Activated naive CD4-positive, alpha-beta T cell treated with anti-CD3 and anti-CD28 coated beads for 36 hours (primary cell): ENCODE measurements at regions of chr4 and their contacts with region 1.

Region 1: GRCh38 chr4:153127760-153128494 is 76.3 kb upstream of the TRIM2 start:
- DNase-seq: peak; percentile 95
- H3K4me3 Mint-ChIP-seq: no peak overlapping the region
- H3K27ac Mint-ChIP-seq: no peak overlapping the region
- H3K4me1 Mint-ChIP-seq: peaks cover 9% of the 10 kb centered on the region
- H3K27me3 Mint-ChIP-seq: no peaks in the 10 kb centered on the region

Region 2: GRCh38 chr4:152817331-152817730 is 310.6 kb before region 1 on chr4:
- CTCF ChIA-PET with region 1: no interaction called
- intact Hi-C with region 1: no loop called
- DNase-seq: no peak
- H3K4me3 Mint-ChIP-seq: no peak overlapping the region
- H3K27ac Mint-ChIP-seq: peak overlapping the region; percentile 28
- H3K4me1 Mint-ChIP-seq: peaks cover 12% of the 10 kb centered on the region
- H3K27me3 Mint-ChIP-seq: no peaks in the 10 kb centered on the region

Region 3: DNA sequence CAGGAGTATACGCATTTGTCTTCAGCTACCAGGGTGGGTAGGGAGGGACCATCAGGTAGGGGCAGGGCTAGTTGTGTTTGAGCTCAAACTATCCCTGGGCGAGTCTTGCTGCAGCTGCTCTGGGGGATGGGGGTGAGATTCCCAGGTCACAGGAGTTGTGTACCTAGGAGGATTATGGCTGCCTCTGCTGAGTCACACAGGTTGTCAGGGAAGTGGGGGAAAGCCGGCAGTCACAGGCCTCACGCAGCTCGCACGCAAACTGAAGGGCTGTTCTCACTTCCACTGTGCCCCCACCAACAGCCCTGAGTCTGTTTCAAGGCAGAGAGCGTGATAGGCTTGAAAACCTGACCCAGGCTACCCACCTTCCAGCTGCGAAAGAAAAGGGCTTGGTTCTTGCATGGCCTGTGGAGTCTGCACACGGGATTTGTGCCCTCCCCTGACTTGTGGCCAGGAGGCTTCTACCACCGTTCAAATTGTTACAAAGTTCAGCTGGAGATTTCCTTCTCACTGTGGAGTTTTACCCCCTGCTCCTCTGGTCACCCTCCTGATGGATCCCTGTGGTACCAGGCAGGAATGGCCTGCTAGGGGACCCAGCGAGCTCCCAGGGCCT is 284.3 kb before region 1 on chr4:
- CTCF ChIA-PET with region 1: interaction called, 46 read pairs
- intact Hi-C with region 1: loop called (anchors 1 kb)
- DNase-seq: no peak
- H3K4me3 Mint-ChIP-seq: no peak overlapping the region
- H3K27ac Mint-ChIP-seq: no peak overlapping the region
- H3K4me1 Mint-ChIP-seq: peaks cover 17% of the 10 kb centered on the region
- H3K27me3 Mint-ChIP-seq: no peaks in the 10 kb centered on the region

Region 4: GRCh38 chr4:152937336-152938236 is 190.3 kb before region 1 on chr4:
- CTCF ChIA-PET with region 1: interaction called, 9 read pairs
- intact Hi-C with region 1: loop called (anchors 1 kb)
- DNase-seq: no peak
- H3K4me3 Mint-ChIP-seq: peak overlapping the region; percentile 67
- H3K27ac Mint-ChIP-seq: no peak overlapping the region
- H3K4me1 Mint-ChIP-seq: peaks cover 16% of the 10 kb centered on the region
- H3K27me3 Mint-ChIP-seq: peaks cover 44% of the 10 kb centered on the region

Region 5: GRCh38 chr4:153095448-153096204 is 32.3 kb before region 1 on chr4:
- CTCF ChIA-PET with region 1: interaction called, 45 read pairs
- intact Hi-C with region 1: no loop called
- DNase-seq: no peak
- H3K4me3 Mint-ChIP-seq: no peak overlapping the region
- H3K27ac Mint-ChIP-seq: no peak overlapping the region
- H3K4me1 Mint-ChIP-seq: peaks cover 4% of the 10 kb centered on the region
- H3K27me3 Mint-ChIP-seq: no peaks in the 10 kb centered on the region

Region 6: GRCh38 chr4:153448003-153448731 is 320.2 kb after region 1 on chr4:
- CTCF ChIA-PET with region 1: no interaction called
- intact Hi-C with region 1: no loop called
- DNase-seq: no peak
- H3K4me3 Mint-ChIP-seq: no peak overlapping the region
- H3K27ac Mint-ChIP-seq: no peak overlapping the region
- H3K4me1 Mint-ChIP-seq: peaks cover 28% of the 10 kb centered on the region
- H3K27me3 Mint-ChIP-seq: no peaks in the 10 kb centered on the region

Region 7: GRCh38 chr4:153722036-153722435 is 594.1 kb after region 1 on chr4:
- CTCF ChIA-PET with region 1: no interaction called
- intact Hi-C with region 1: no loop called
- DNase-seq: no peak
- H3K4me3 Mint-ChIP-seq: no peak overlapping the region
- H3K27ac Mint-ChIP-seq: no peak overlapping the region
- H3K4me1 Mint-ChIP-seq: no peaks in the 10 kb centered on the region
- H3K27me3 Mint-ChIP-seq: no peaks in the 10 kb centered on the region